HepG2 (cell line): ENCODE measurements at regions of chr11 and their contacts with region 1.

Region 1: GRCh38 chr11:120674542-120674941 is 163.0 kb downstream of the GRIK4 start:
- DNase-seq: peak; percentile 94
- ATAC-seq: peak; percentile 96
- H3K4me3 ChIP-seq: peak overlapping the region in 2 of 3 experiments; percentile 5 to 29; a peak in 2 of 6 replicates
- H3K27ac ChIP-seq: peak overlapping the region; percentile 65
- H3K4me1 ChIP-seq: peaks cover 35% of the 10 kb centered on the region
- H3K27me3 ChIP-seq: no peaks in the 10 kb centered on the region
- CTCF ChIP-seq: 0 out of 2 replicates have a peak, but pooled peaks have one; percentile 7
- EP300 ChIP-seq: peak; percentile 37 to 86; a peak in 2 of 4 replicates
- POLR2A ChIP-seq: no peak
- RAD21 ChIP-seq: no peak

Region 2: GRCh38 chr11:120710354-120711131 is 36.0 kb after region 1 on chr11:
- CTCF ChIA-PET with region 1: no interaction called
- POLR2A ChIA-PET with region 1: interaction called, 12 read pairs
- in situ Hi-C with region 1: no loop called
- intact Hi-C with region 1: no loop called
- DNase-seq: peak; percentile 89
- ATAC-seq: peak; percentile 90
- H3K4me3 ChIP-seq: peak overlapping the region in 1 of 3 experiments; percentile 20; a peak in 1 of 6 replicates
- H3K27ac ChIP-seq: peak overlapping the region; percentile 27
- H3K4me1 ChIP-seq: peaks cover 48% of the 10 kb centered on the region
- H3K27me3 ChIP-seq: peaks cover 0 to 3% of the 10 kb centered on the region in 2 experiments; a peak in 1 of 5 replicates
- CTCF ChIP-seq: no peak
- EP300 ChIP-seq: peak in 1 of 2 experiments; percentile 76; a peak in 2 of 4 replicates
- POLR2A ChIP-seq: no peak
- RAD21 ChIP-seq: no peak